ENCODE measurements at regions of chr3 and their contacts with region 1.

Region 1: GRCh38 chr3:157130467-157131251 is 29.3 kb downstream of the CCNL1 start:
- DNase-seq: peak; percentile 85
- H3K4me3 Mint-ChIP-seq: peak overlapping the region; percentile 61
- H3K27ac Mint-ChIP-seq: peak overlapping the region; percentile 98
- H3K4me1 Mint-ChIP-seq: peaks cover 48% of the 10 kb centered on the region
- H3K27me3 Mint-ChIP-seq: no peaks in the 10 kb centered on the region

Region 2: GRCh38 chr3:156151824-156152428 is 978.7 kb before region 1 on chr3:
- CTCF ChIA-PET with region 1: no interaction called
- intact Hi-C with region 1: loop called (anchors 2 kb)
- DNase-seq: peak; percentile 77
- H3K4me3 Mint-ChIP-seq: no peak overlapping the region
- H3K27ac Mint-ChIP-seq: no peak overlapping the region
- H3K4me1 Mint-ChIP-seq: peaks cover 3% of the 10 kb centered on the region
- H3K27me3 Mint-ChIP-seq: no peaks in the 10 kb centered on the region

Region 3: DNA sequence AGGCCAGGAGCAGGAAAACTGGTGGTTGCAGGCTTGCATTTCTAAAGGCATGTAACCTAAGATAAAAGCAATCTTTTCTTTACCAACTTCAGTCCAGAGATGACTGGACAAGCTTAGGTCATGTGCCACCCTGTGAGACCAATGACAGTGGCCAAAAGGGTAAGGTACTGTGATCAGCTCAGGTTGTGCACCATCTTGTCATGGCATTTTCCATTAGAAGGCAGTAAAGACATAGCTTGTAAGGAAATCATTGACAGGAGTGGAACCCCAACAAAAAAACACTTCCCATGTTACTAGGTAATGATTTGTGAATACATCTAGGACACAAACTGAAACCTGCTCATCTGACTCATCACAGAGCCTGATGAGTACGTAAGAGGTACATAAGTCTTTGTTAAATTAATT is 610.9 kb before region 1 on chr3:
- CTCF ChIA-PET with region 1: no interaction called
- intact Hi-C with region 1: loop called (anchors 5 kb)
- DNase-seq: peak; percentile 34
- H3K4me3 Mint-ChIP-seq: no peak overlapping the region
- H3K27ac Mint-ChIP-seq: no peak overlapping the region
- H3K4me1 Mint-ChIP-seq: peaks cover 17% of the 10 kb centered on the region
- H3K27me3 Mint-ChIP-seq: peaks cover 21% of the 10 kb centered on the region

Region 4: DNA sequence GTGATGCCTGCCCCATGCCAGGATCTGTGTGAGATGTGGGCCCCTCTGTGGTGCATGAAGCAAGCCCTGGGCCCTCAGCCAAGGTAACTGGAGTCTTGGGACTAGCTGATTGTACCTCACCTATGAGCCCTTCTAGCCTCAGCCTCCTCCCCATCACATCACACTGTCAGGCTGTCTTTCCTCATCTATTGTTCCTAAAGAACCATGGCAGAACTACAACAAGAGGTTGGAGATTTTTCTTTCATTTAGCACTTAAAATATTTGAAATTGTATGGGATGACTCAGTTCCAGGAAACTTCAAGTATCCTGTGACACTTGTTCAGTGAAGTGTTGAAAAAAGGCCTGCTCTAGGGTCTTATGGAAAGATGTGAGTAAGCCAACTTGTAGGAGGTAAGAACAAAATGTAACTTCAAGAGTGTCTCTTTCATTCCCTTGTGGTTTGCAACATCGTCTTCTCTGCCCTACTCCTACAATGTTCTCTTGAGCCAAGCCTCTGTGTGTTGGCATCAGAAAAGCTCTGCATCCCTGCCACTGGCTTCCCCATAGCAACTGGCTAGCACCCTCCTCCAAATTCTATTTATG is 515.0 kb before region 1 on chr3:
- CTCF ChIA-PET with region 1: no interaction called
- intact Hi-C with region 1: no loop called
- DNase-seq: no peak
- H3K4me3 Mint-ChIP-seq: no peak overlapping the region
- H3K27ac Mint-ChIP-seq: peak overlapping the region; percentile 65
- H3K4me1 Mint-ChIP-seq: peaks cover 21% of the 10 kb centered on the region
- H3K27me3 Mint-ChIP-seq: peaks cover 3% of the 10 kb centered on the region

Region 5: DNA sequence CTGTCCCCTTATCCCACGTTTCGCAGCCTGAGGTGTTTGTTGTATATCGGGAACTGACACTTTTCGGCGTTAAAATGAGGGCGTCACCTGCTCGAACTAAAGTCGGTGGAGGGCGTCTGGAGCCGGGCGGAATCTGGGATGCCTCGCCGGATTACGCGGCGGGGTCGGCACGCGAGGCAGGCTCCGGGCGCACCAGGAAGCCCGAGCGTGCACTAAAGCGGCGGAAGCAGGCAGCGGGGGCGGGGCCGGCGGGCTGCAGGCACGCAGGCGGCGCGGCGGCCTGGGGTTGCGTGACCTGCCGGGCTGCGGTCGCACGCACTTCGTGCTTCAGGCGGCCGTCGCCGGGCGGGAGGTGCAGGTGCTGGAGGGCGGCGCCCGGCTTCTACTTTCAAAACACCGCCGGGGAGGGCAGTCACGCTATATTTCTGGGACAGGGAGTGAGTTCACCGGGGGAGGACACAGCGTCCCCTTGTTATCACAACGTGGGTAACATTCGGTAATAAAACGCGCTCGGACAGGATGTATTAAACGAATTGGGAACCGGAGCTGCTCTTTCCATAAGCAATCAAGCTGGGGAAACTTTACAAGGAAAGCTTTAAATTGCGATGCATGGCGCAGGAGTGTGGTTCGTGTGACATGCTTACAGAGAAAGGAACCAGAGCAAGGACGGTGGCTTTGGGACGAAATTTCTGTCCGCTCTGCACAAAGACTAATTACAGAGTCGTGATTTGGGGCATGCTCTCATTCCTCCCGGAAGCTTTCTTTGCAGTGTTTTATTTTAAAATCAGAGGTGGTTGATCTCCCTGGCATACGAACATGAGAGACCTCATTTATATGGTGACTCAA is 313.6 kb before region 1 on chr3:
- CTCF ChIA-PET with region 1: no interaction called
- intact Hi-C with region 1: loop called (anchors 1 kb)
- DNase-seq: peak; percentile 90
- H3K4me3 Mint-ChIP-seq: peak overlapping the region; percentile 90
- H3K27ac Mint-ChIP-seq: peak overlapping the region; percentile 88
- H3K4me1 Mint-ChIP-seq: peaks cover 22% of the 10 kb centered on the region
- H3K27me3 Mint-ChIP-seq: no peaks in the 10 kb centered on the region

Region 6: DNA sequence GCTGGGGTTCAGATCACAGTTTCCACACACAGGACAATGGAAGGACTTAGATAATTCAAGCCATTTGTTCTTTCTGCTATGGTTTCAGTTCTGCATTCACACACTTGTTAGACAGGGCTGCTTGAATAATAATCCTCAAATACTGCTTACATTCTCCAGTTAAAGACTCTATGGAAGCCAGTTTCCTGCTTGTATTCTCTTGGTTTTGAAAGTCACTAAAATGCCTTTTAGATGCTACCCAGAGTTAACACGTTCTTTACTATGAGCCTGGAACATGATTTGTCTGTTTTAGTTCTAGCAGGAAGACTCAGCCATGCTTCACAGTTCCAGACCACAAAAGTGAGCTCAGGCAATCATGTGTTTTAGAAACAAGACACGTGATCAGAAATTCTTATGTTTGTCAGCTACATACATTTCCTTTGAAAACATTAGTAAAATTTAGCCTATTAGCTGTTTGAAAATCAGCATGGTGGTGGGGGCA is 152.1 kb before region 1 on chr3:
- CTCF ChIA-PET with region 1: no interaction called
- intact Hi-C with region 1: loop called (anchors 10 kb)
- DNase-seq: no peak
- H3K4me3 Mint-ChIP-seq: no peak overlapping the region
- H3K27ac Mint-ChIP-seq: no peak overlapping the region
- H3K4me1 Mint-ChIP-seq: peaks cover 8% of the 10 kb centered on the region
- H3K27me3 Mint-ChIP-seq: no peaks in the 10 kb centered on the region

Region 7: GRCh38 chr3:157088601-157089454 is 41.8 kb before region 1 on chr3:
- CTCF ChIA-PET with region 1: interaction called, 54 read pairs
- intact Hi-C with region 1: loop called (anchors 1 kb)
- DNase-seq: peak; percentile 94
- H3K4me3 Mint-ChIP-seq: peak overlapping the region; percentile 73
- H3K27ac Mint-ChIP-seq: peak overlapping the region; percentile 96
- H3K4me1 Mint-ChIP-seq: peaks cover 51% of the 10 kb centered on the region
- H3K27me3 Mint-ChIP-seq: peaks cover 4% of the 10 kb centered on the region

Region 8: GRCh38 chr3:157159762-157160657 is 29.4 kb after region 1 on chr3 and contains the start of gene CCNL1:
- CTCF ChIA-PET with region 1: no interaction called
- intact Hi-C with region 1: loop called (anchors 1 kb)
- DNase-seq: peak; percentile 94
- H3K4me3 Mint-ChIP-seq: peak within 1 kb of the TSS; percentile 93
- H3K27ac Mint-ChIP-seq: peak within 1 kb of the TSS; percentile 99
- H3K4me1 Mint-ChIP-seq: peaks cover 43% of the 10 kb centered on the region
- H3K27me3 Mint-ChIP-seq: no peaks in the 10 kb centered on the region
- total RNA-seq, gene CCNL1: 206 to 214 TPM

Measured in activated naive CD4-positive, alpha-beta T cell treated with anti-CD3 and anti-CD28 coated beads for 36 hours (primary cell).